Activated T-helper 1 cell treated with anti-CD3 and anti-CD28 coated beads, Interleukin-12 subunit alpha, Interleukin-12 subunit beta, Interleukin-2, Interleukin-4 antibody, amounts not matched to agents 30 ng/mL and 10 ng/mL and 1 ng/mL, durations not matched to agents 14 hours and 24 hours and 36 hours (primary cell): ENCODE measurements at regions of chr2 and their contacts with region 1.

Region 1: GRCh38 chr2:10079234-10079869 is 859 bp downstream of the CYS1 start:
- DNase-seq: no peak
- H3K4me3 Mint-ChIP-seq: peak overlapping the region; percentile 81
- H3K27ac Mint-ChIP-seq: peak overlapping the region; percentile 66
- H3K4me1 Mint-ChIP-seq: peaks cover 47% of the 10 kb centered on the region
- H3K27me3 Mint-ChIP-seq: peaks cover 66% of the 10 kb centered on the region

Region 2: DNA sequence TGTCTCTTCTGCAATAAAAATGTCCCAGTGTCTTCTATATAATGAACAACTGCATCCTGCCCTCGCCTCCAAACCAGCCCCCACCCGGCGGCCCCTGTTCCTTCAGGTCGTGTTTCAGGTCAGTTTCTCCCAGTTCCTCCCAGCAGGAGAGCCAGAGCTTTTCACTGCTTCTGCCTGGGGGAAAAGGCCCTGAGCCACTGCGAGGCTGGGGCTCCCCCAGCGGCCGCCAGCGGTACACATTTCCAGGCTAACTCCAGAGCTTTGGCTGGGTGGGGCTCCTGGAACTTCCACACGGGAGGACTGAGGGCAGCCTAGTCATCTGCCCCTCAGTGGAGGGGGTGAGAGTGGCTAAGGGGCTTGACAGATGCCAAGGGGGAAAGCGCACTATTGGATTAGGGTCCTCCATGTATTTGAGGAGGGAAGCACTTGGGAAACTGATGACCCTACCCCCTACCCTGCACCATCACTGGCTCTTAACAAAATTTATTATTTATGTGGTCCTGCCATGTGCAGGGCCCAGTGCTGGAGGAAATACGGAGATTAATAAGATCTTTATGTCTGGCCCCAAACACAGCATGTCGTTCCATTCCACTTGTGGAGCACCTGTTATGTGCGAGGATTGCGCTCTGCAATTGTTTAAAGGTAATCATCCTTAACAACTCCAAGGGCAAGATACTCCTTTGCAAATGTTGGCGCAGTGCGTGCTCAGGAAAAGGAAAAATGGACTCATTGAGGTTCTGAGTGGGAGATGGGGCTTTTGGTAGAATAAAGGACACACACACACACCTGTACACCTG is 18.2 kb after region 1 on chr2:
- intact Hi-C with region 1: loop called (anchors 1 kb)
- DNase-seq: no peak
- H3K4me3 Mint-ChIP-seq: no peak overlapping the region
- H3K27ac Mint-ChIP-seq: no peak overlapping the region
- H3K4me1 Mint-ChIP-seq: peaks cover 10% of the 10 kb centered on the region
- H3K27me3 Mint-ChIP-seq: peaks cover 34% of the 10 kb centered on the region

Region 3: DNA sequence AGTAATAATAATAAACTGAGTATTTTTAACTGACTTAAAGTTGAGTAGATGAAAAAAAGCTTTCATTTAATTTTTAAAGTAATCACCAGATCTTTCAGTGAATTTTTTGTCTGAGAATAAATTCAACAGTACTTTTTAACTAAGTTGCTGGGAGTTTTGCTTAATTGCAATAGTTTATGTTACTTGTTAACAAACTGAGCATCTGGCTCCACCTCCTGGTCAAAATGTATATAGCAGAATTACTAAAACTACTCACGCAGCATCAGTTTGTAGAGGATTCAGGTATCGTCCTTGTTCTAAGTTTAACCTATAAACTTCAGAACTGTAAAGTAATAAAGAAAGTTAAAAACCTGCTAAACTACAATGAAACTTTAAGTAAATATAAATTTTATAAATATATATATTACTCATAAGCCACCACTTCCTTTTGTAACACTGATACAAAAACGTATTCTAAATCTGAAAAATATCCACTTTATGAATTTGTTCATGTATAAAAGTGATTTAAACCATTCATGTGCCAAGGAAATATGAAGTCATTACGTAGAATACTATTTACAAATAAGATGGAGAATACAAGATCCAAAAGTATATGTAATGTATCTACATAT is 589.2 kb after region 1 on chr2:
- intact Hi-C with region 1: loop called (anchors 2 kb)
- DNase-seq: no peak
- H3K4me3 Mint-ChIP-seq: no peak overlapping the region
- H3K27ac Mint-ChIP-seq: no peak overlapping the region
- H3K4me1 Mint-ChIP-seq: peaks cover 5% of the 10 kb centered on the region
- H3K27me3 Mint-ChIP-seq: no peaks in the 10 kb centered on the region